Calu3 (cell line): ENCODE measurements at regions of chr10 and their contacts with region 1.

Region 1: DNA sequence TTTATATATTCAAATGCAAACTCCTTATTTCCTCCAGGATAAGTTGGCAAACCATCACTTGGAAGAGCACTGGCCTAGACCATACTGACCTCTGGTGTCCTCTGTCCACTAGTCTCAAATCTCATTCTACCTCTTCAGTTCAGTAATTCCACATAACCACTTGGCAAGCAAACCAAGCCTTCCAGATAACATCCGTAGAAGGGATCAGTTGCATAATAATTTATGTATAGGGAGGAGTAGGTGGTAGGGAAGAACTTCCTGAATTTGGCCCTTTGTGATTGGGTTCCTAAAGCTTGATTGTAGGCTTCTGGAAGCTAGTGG is 55.0 kb downstream of the WAC start:
- DNase-seq: no peak
- H3K4me3 Mint-ChIP-seq: no peak overlapping the region
- H3K27ac Mint-ChIP-seq: no peak overlapping the region
- H3K4me1 Mint-ChIP-seq: peaks cover 37% of the 10 kb centered on the region
- H3K27me3 Mint-ChIP-seq: no peaks in the 10 kb centered on the region
- CTCF ChIP-seq: no peak

Region 2: GRCh38 chr10:28551086-28551485 is 36.8 kb before region 1 on chr10:
- CTCF ChIA-PET with region 1: no interaction called
- intact Hi-C with region 1: loop called (anchors 5 kb)
- DNase-seq: no peak
- H3K4me3 Mint-ChIP-seq: no peak overlapping the region
- H3K27ac Mint-ChIP-seq: peak overlapping the region; percentile 44
- H3K4me1 Mint-ChIP-seq: peaks cover 69% of the 10 kb centered on the region
- H3K27me3 Mint-ChIP-seq: no peaks in the 10 kb centered on the region
- CTCF ChIP-seq: no peak